Gastrocnemius medialis (tissue), 4 donors: ENCODE measurements at regions of chr2 and their contacts with region 1.

Region 1: GRCh38 chr2:198127627-198128026 is 323.2 kb downstream of the PLCL1 start:
- DNase-seq: peak; percentile 28 to 37
- ATAC-seq: peak; percentile 69 to 87
- H3K4me3 ChIP-seq: no peak overlapping the region
- H3K27ac ChIP-seq: no peak overlapping the region
- H3K4me1 ChIP-seq: peaks cover 6 to 17% of the 10 kb centered on the region in 2 donors
- H3K27me3 ChIP-seq: no peaks in the 10 kb centered on the region
- CTCF ChIP-seq: peak; percentile 64 to 80 (median 71)
- POLR2A ChIP-seq: no peak

Region 2: GRCh38 chr2:197799068-197799467 is 328.6 kb before region 1 on chr2:
- in situ Hi-C with region 1: loop called in 3 of 4 experiments (anchors 5 to 10 kb)
- intact Hi-C with region 1: loop called (anchors 1 kb)
- DNase-seq: no peak
- ATAC-seq: peak; percentile 35 to 43
- H3K4me3 ChIP-seq: no peak overlapping the region
- H3K27ac ChIP-seq: peak overlapping the region; percentile 43 to 89 (median 68)
- H3K4me1 ChIP-seq: peaks cover 38% of the 10 kb centered on the region in 2 donors
- H3K27me3 ChIP-seq: no peaks in the 10 kb centered on the region
- CTCF ChIP-seq: no peak
- POLR2A ChIP-seq: no peak

Region 3: GRCh38 chr2:197813093-197813787 is 314.4 kb before region 1 on chr2:
- in situ Hi-C with region 1: loop called in 1 of 4 experiments (anchors 5 kb)
- intact Hi-C with region 1: no loop called
- DNase-seq: no peak
- ATAC-seq: peak in 1 of 2 donors; percentile 86
- H3K4me3 ChIP-seq: no peak overlapping the region
- H3K27ac ChIP-seq: no peak overlapping the region
- H3K4me1 ChIP-seq: peaks cover 22 to 45% of the 10 kb centered on the region in 2 donors
- H3K27me3 ChIP-seq: no peaks in the 10 kb centered on the region
- CTCF ChIP-seq: peak in 3 of 5 experiments; percentile 9 to 47 (median 41)
- POLR2A ChIP-seq: no peak

Region 4: GRCh38 chr2:197851451-197851850 is 276.2 kb before region 1 on chr2:
- in situ Hi-C with region 1: no loop called
- intact Hi-C with region 1: loop called (anchors 2 kb)
- DNase-seq: no peak
- ATAC-seq: peak in 1 of 2 donors; percentile 61
- H3K4me3 ChIP-seq: no peak overlapping the region
- H3K27ac ChIP-seq: peak overlapping the region in 2 of 4 donors; percentile 6 to 15
- H3K4me1 ChIP-seq: peaks cover 49 to 67% of the 10 kb centered on the region in 2 donors
- H3K27me3 ChIP-seq: no peaks in the 10 kb centered on the region
- CTCF ChIP-seq: peak in 1 of 5 experiments; percentile 32
- POLR2A ChIP-seq: no peak